ENCODE measurements at regions of chr10 and their contacts with region 1.

Region 1: DNA sequence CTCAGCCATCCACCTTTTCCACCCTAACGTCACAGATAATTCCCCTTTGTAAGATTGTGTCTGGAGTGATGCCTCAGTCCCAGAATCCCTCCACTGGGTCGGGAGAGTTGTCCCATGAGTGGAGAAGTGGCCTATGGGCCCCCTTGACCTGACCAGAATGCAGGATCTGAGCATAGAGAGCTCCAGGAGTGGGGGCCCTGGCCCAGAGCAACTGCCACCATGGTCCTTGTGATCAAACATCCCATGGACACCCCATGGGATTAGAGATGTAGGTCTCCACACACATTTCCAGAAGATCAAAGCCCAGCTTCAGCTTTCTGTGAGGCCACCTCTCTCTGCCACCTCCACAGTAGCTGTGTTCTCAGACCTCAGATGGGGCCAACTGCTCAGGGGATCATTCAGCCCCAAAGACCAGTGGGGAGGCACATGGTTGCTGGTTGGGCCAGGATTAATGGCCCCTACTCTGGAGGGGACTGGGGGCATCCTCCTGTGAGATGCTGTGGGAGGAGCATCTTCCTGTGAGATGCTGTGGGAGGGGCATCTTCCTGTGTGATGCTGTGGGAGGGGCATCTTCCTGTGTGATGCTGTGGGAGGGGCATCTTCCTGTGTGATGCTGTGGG is 28.5 kb upstream of the DPYSL4 start:
- DNase-seq: peak; percentile 66 to 75 (median 73)
- H3K4me3 ChIP-seq: no peak overlapping the region
- H3K4me3 Mint-ChIP-seq: peak overlapping the region in 4 of 8 donors; percentile 7 to 54 (median 12)
- H3K27ac ChIP-seq: peak overlapping the region; percentile 97
- H3K27ac Mint-ChIP-seq: peak overlapping the region; percentile 93 to 96 (median 94)
- H3K4me1 ChIP-seq: peaks cover 32% of the 10 kb centered on the region
- H3K4me1 Mint-ChIP-seq: peaks cover 14 to 40% (median 33%) of the 10 kb centered on the region in 4 donors
- H3K27me3 ChIP-seq: no peaks in the 10 kb centered on the region
- H3K27me3 Mint-ChIP-seq: no peaks in the 10 kb centered on the region

Region 2: DNA sequence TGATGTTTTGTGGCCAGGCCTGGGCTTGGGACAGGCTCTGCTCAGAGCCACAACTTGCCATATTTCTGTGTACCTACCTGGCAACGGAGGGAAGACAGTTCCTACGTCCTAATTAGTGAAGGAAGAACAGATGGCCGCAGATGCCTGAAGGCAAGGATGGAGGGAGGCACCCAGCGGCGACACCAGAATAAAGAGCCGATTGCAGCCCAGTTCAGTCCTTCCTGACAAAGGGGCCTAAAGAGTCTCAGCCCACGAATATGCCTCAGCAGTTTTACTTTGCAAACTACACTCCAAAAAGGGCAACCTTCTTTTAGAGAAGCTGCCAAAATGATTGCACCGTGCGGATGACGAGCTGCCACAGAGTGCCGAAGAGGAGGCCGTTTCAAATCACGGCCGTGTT is 1436.3 kb before region 1 on chr10:
- CTCF ChIA-PET with region 1: no interaction called
- POLR2A ChIA-PET with region 1: no interaction called
- intact Hi-C with region 1: no loop called
- DNase-seq: no peak
- H3K4me3 ChIP-seq: no peak overlapping the region
- H3K4me3 Mint-ChIP-seq: no peak overlapping the region
- H3K27ac ChIP-seq: no peak overlapping the region
- H3K27ac Mint-ChIP-seq: no peak overlapping the region
- H3K4me1 ChIP-seq: no peaks in the 10 kb centered on the region
- H3K4me1 Mint-ChIP-seq: no peaks in the 10 kb centered on the region
- H3K27me3 ChIP-seq: no peaks in the 10 kb centered on the region
- H3K27me3 Mint-ChIP-seq: no peaks in the 10 kb centered on the region

Region 3: DNA sequence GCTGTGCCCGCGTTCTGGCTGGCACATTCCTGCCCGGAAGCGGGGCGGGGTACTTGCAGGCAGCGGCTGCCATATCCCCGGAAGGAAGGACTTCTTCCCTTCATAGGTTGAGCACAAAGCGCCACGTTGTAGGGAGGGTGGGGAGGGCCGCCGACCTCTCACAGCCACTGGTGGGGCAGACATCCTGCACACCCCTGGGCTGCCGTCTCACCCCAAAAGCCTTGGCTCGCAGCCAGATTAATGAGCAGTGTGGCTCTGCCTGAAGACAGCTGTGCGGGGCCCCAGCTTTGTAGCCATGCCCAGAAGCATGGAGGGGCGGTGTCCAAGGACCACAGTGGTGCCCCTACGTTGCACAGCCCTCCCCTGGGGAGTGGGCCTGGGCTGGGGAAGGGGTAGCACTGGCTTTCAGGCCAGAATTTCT is 25.8 kb before region 1 on chr10:
- CTCF ChIA-PET with region 1: no interaction called
- POLR2A ChIA-PET with region 1: no interaction called
- intact Hi-C with region 1: no loop called
- DNase-seq: no peak
- H3K4me3 ChIP-seq: no peak overlapping the region
- H3K4me3 Mint-ChIP-seq: no peak overlapping the region
- H3K27ac ChIP-seq: no peak overlapping the region
- H3K27ac Mint-ChIP-seq: no peak overlapping the region
- H3K4me1 ChIP-seq: no peaks in the 10 kb centered on the region
- H3K4me1 Mint-ChIP-seq: peaks cover 0 to 1% (median 0%) of the 10 kb centered on the region in 4 donors
- H3K27me3 ChIP-seq: no peaks in the 10 kb centered on the region
- H3K27me3 Mint-ChIP-seq: peaks cover 10 to 16% of the 10 kb centered on the region in 2 donors

Region 4: GRCh38 chr10:132452631-132453469 is 294.6 kb after region 1 on chr10:
- CTCF ChIA-PET with region 1: no interaction called
- POLR2A ChIA-PET with region 1: no interaction called
- intact Hi-C with region 1: loop called (anchors 2 kb)
- DNase-seq: peak; percentile 91 to 92 (median 91)
- H3K4me3 ChIP-seq: peak overlapping the region in 1 of 2 donors; percentile 32
- H3K4me3 Mint-ChIP-seq: peak overlapping the region in 6 of 8 donors; percentile 45 to 79 (median 56)
- H3K27ac ChIP-seq: peak overlapping the region; percentile 86
- H3K27ac Mint-ChIP-seq: peak overlapping the region; percentile 83 to 98 (median 95)
- H3K4me1 ChIP-seq: peaks cover 31% of the 10 kb centered on the region
- H3K4me1 Mint-ChIP-seq: peaks cover 6 to 37% (median 15%) of the 10 kb centered on the region in 4 donors
- H3K27me3 ChIP-seq: no peaks in the 10 kb centered on the region
- H3K27me3 Mint-ChIP-seq: no peaks in the 10 kb centered on the region

Measured in CD4-positive, alpha-beta memory T cell (primary cell).